ENCODE measurements at regions of chr1 and their contacts with region 1.

Region 1: DNA sequence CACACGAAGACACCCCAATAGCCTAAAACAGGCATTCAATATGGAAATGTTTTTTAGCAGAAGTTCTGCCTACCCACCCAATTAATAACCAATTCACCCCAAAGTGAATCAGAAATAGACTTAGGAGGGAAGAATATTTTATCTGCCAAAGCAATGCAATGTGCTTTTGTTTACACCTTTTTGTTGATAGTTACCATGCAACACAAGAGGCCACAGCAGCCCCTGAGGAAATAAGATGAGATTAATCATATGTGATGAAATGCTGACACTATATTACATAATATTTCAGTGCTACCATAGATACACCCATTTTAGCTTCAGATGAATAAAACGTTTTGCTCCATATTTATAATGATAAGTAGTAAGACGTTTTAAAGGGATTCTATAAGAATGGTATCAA is 60.9 kb upstream of the RGS2 start:
- DNase-seq: no peak
- ATAC-seq: no peak
- H3K4me3 ChIP-seq: no peak overlapping the region
- H3K27ac ChIP-seq: no peak overlapping the region
- H3K4me1 ChIP-seq: no peaks in the 10 kb centered on the region
- H3K27me3 ChIP-seq: no peaks in the 10 kb centered on the region; a peak in 1 of 4 replicates
- CTCF ChIP-seq: no peak
- EP300 ChIP-seq: no peak
- POLR2A ChIP-seq: no peak
- RAD21 ChIP-seq: no peak

Region 2: GRCh38 chr1:192730198-192730597 is 17.7 kb before region 1 on chr1:
- CTCF ChIA-PET with region 1: no interaction called
- POLR2A ChIA-PET with region 1: no interaction called
- RAD21 ChIA-PET with region 1: no interaction called
- SMC1A ChIA-PET with region 1: interaction called, 10 read pairs
- in situ Hi-C with region 1: no loop called
- intact Hi-C with region 1: no loop called
- DNase-seq: no peak
- ATAC-seq: no peak
- H3K4me3 ChIP-seq: no peak overlapping the region
- H3K27ac ChIP-seq: no peak overlapping the region
- H3K4me1 ChIP-seq: no peaks in the 10 kb centered on the region
- H3K27me3 ChIP-seq: no peaks in the 10 kb centered on the region
- CTCF ChIP-seq: no peak
- EP300 ChIP-seq: no peak
- POLR2A ChIP-seq: no peak
- RAD21 ChIP-seq: no peak